ENCODE measurements at regions of chr3 and their contacts with region 1.

Region 1: GRCh38 chr3:184805351-184806038 is 6.5 kb upstream of the VPS8 start:
- DNase-seq: no peak
- H3K4me3 Mint-ChIP-seq: no peak overlapping the region
- H3K27ac Mint-ChIP-seq: no peak overlapping the region
- H3K4me1 Mint-ChIP-seq: no peaks in the 10 kb centered on the region
- H3K27me3 Mint-ChIP-seq: peaks cover 5% of the 10 kb centered on the region

Region 2: GRCh38 chr3:184185461-184186308 is 619.8 kb before region 1 on chr3 and contains the start of gene ABCF3:
- CTCF ChIA-PET with region 1: no interaction called
- intact Hi-C with region 1: no loop called
- DNase-seq: peak; percentile 99
- H3K4me3 Mint-ChIP-seq: peak within 1 kb of the TSS; percentile 94
- H3K27ac Mint-ChIP-seq: peak within 1 kb of the TSS; percentile 92
- H3K4me1 Mint-ChIP-seq: peaks cover 28% of the 10 kb centered on the region
- H3K27me3 Mint-ChIP-seq: no peaks in the 10 kb centered on the region
- total RNA-seq, gene ABCF3: 38.5 to 39.1 TPM

Region 3: DNA sequence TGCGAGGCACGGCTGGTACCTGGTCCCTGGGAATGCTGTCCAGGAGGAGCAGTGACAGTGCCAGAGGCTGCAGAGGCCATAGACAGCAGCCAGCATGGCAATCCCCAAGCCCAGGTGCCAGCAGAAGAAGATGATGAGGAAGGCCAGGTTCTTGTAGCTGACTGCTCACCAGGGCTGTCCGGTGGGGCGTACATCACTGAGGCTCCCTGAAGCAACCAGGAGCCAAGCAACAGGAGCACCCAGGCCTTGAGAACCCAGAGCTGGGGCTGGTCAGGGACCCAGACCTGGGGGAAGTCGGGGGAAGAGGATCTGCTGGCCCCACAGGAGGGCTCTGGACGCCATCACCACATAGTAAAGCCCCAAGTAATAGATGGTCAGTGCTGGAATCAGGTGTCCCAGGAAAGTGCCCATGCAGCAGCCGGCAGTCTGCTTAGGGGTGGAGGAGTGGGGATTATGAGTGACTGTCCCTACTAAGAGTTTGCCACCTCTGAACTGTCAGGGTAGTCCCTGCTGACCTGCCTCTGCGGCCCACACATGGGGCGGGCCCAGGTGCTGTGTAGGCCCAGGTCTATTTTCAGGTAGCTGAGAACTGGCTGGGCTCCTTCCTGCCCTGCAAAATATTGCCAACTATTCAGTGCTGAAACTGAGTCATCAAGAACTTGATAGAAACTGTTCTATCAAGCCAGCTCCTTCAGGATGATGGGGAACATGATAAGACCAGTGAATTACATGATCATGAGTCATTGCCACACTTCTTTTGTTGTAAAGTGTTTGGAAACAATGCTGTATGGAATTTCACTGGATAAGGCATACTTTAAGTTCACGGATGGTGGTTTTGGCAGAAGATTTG is 357.0 kb before region 1 on chr3:
- CTCF ChIA-PET with region 1: no interaction called
- intact Hi-C with region 1: no loop called
- DNase-seq: no peak
- H3K4me3 Mint-ChIP-seq: no peak overlapping the region
- H3K27ac Mint-ChIP-seq: no peak overlapping the region
- H3K4me1 Mint-ChIP-seq: no peaks in the 10 kb centered on the region
- H3K27me3 Mint-ChIP-seq: no peaks in the 10 kb centered on the region

Region 4: DNA sequence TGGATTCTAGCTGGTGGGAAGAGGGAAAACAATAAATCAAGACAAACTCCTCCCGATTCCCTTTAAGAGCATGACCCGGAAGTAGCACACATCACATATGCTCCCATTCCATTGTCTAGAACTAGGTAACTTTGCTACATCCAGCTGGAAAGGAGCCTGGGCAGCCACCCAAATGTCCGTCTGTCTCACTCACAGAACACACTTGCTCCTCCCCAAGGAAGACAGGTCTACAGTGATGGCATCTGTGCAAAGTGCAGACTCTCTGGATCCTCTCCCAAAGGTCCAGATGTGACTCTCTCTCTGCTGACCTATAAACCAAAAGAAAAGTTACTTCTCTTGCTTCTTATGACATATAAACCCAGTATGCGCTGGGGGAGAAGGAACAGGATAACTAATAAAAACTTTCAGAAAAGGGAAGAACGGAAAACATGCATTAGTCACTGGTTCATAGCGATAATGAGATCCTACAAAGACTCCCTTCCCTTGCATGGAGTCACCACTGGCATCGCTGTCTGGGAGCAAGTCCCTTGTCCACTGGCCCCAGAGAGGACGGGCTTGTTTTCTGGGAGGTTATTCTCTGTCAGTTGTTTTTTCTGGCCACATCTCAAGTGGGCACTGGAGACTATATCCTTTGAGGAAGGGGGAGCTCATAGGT is 273.7 kb before region 1 on chr3:
- CTCF ChIA-PET with region 1: no interaction called
- intact Hi-C with region 1: no loop called
- DNase-seq: no peak
- H3K4me3 Mint-ChIP-seq: no peak overlapping the region
- H3K27ac Mint-ChIP-seq: no peak overlapping the region
- H3K4me1 Mint-ChIP-seq: no peaks in the 10 kb centered on the region
- H3K27me3 Mint-ChIP-seq: peaks cover 3% of the 10 kb centered on the region

Region 5: GRCh38 chr3:184786280-184786941 is 19.1 kb before region 1 on chr3:
- CTCF ChIA-PET with region 1: interaction called, 23 read pairs
- intact Hi-C with region 1: no loop called
- DNase-seq: peak; percentile 49
- H3K4me3 Mint-ChIP-seq: no peak overlapping the region
- H3K27ac Mint-ChIP-seq: no peak overlapping the region
- H3K4me1 Mint-ChIP-seq: peaks cover 25% of the 10 kb centered on the region
- H3K27me3 Mint-ChIP-seq: no peaks in the 10 kb centered on the region

Region 6: GRCh38 chr3:185009650-185010049 is 204.2 kb after region 1 on chr3:
- CTCF ChIA-PET with region 1: no interaction called
- intact Hi-C with region 1: no loop called
- DNase-seq: no peak
- H3K4me3 Mint-ChIP-seq: no peak overlapping the region
- H3K27ac Mint-ChIP-seq: no peak overlapping the region
- H3K4me1 Mint-ChIP-seq: no peaks in the 10 kb centered on the region
- H3K27me3 Mint-ChIP-seq: no peaks in the 10 kb centered on the region

Measured in activated naive CD4-positive, alpha-beta T cell treated with anti-CD3 and anti-CD28 coated beads for 36 hours (primary cell).